ENCODE measurements at regions of chr6 and their contacts with region 1.

Region 1: DNA sequence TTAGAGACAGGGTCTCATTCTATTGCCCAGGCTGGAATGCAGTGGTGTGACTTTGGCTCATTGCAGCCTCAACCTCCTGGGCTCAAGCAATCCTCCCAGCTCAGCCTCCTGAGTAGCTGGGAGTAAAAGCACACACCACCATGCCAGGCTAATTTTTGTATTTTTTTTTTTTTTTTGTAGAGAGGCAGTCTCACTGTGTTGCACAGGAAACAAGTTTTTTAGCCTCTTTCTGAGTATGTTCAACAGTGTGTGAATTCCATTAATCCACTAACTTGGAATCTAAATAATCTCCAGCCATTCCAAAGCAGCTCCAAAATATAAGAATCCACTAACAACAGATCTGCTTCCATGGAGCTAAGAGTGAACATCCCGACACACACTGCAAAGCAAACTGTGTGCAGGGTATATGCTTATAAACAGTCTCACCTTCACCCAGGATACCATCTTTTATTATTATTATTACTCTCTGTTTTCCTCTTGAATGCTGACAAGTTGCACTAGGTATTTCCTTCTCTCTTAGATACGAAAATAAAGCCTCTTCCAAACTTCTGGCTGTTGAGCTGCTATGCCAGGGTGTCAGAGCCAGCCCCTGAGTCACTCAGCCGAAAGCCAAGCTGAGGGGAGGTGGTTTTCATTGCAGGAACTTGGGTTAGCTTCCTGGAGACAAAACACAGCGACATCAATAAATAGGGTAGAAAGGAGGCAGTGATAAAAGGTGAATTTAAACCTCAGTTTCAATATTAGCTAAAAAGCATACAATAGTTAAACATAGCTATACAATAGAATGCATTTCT is 264.9 kb downstream of the HIVEP2 start:
- DNase-seq: no peak
- H3K4me3 ChIP-seq: no peak overlapping the region
- H3K27ac ChIP-seq: no peak overlapping the region
- H3K4me1 ChIP-seq: 0 out of 2 replicates have a peak, but pooled peaks cover 4% of the 10 kb centered on the region
- H3K27me3 ChIP-seq: no peaks in the 10 kb centered on the region
- CTCF ChIP-seq: no peak

Region 2: GRCh38 chr6:142458836-142459235 is 221.3 kb before region 1 on chr6:
- CTCF ChIA-PET with region 1: no interaction called
- POLR2A ChIA-PET with region 1: no interaction called
- intact Hi-C with region 1: no loop called
- DNase-seq: no peak
- H3K4me3 ChIP-seq: no peak overlapping the region
- H3K27ac ChIP-seq: no peak overlapping the region
- H3K4me1 ChIP-seq: no peaks in the 10 kb centered on the region
- H3K27me3 ChIP-seq: no peaks in the 10 kb centered on the region
- CTCF ChIP-seq: no peak

Region 3: DNA sequence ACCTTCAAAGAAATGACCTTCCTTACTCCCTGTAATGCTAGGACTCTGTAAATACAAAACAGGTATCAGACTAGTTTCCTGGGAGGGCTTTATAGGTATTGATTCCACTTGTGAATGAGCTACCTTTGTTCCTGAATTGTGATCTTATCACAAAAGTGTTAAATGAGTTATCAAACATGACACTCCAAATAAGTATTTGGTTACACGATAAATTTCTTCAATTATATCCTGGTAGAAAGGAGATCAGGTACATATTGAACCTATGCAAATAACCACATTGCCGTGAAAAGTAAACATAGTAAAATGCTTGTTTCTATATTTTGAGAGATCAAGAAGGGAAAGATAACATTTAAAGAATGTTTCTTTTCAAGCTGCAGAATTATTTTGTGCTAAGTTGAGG is 20.4 kb before region 1 on chr6:
- CTCF ChIA-PET with region 1: no interaction called
- POLR2A ChIA-PET with region 1: interaction called, 10 read pairs
- intact Hi-C with region 1: no loop called
- DNase-seq: peak in 1 of 2 experiments; percentile 59
- H3K4me3 ChIP-seq: no peak overlapping the region
- H3K27ac ChIP-seq: no peak overlapping the region
- H3K4me1 ChIP-seq: 0 out of 2 replicates have a peak, but pooled peaks cover 5% of the 10 kb centered on the region
- H3K27me3 ChIP-seq: no peaks in the 10 kb centered on the region
- CTCF ChIP-seq: no peak

Measured in PC-9 (cell line).